ENCODE measurements at regions of chr1 and their contacts with region 1.

Region 1: DNA sequence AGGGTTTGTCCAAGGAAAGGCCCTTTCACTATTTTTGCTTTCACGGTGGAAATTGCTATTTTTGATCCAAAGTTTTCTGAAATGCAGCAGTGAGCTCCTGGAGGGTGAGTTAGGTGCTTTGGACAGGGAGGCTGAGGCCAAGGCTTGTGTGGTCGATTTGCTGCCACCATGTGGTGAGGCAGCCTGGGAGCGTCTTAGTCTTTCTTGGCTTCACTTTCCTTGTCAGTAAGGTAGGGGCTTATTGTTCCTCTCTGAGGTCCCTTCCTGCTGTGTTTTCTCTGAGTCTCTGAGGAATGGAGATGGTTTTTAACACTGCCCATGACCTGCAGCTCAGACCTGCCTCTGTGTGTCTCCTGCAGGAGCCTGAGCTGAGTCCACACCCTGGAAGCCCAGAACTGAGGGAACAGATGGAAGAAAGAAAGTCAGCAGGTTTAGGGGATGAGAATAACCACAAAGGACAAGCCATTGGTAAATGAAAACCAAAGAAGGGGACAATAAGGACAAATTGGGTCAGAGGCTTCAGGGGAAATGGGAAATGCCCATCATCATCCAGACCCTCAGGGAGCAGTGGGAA is 20.1 kb upstream of the S100A10 start:
- DNase-seq: peak in 1 of 2 experiments; percentile 72
- ATAC-seq: peak; percentile 83 to 91; a peak in 5 of 6 replicates
- H3K4me3 ChIP-seq: no peak overlapping the region
- H3K27ac ChIP-seq: 0 out of 6 replicates have a peak overlapping the region, but pooled peaks of 1 of the 2 experiments have one; percentile 32
- H3K4me1 ChIP-seq: no peaks in the 10 kb centered on the region
- CTCF ChIP-seq: peak; percentile 70
- EP300 ChIP-seq: no peak
- POLR2A ChIP-seq: no peak
- RAD21 ChIP-seq: peak; percentile 63 to 73

Region 2: DNA sequence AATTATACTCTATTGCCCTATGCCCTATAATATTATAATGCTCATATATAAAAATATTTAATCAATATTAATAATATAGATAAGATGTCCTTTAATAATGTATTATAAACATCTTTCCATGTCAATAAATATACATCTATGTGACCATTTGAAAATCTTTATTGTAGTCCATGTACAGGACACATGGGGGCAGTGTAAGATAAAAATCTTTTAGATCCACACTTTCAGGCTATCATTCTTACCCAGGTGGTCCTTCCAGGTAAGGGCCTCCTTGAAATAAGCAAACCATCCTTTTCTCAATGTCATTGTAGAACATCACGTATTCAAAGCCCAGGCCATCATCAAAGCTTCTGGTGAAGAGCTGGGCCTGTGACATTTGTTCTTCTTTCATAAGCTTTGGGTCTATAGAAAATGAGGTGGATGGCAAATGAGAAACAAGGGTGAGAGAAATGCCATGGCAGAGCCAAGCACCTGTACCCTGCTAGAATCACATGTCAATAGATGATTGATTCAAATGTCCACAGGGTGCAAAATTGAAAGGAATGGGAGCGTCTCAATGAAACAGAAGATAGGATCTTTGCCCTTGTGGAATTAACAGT is 124.7 kb before region 1 on chr1:
- CTCF ChIA-PET with region 1: interaction called, 12 read pairs
- POLR2A ChIA-PET with region 1: no interaction called
- DNase-seq: peak; percentile 33 to 41
- ATAC-seq: peak; percentile 68 to 80; a peak in 3 of 6 replicates
- H3K4me3 ChIP-seq: no peak overlapping the region
- H3K27ac ChIP-seq: no peak overlapping the region
- H3K4me1 ChIP-seq: no peaks in the 10 kb centered on the region
- CTCF ChIP-seq: peak; percentile 67
- EP300 ChIP-seq: no peak
- POLR2A ChIP-seq: no peak
- RAD21 ChIP-seq: peak; percentile 70 to 72

Region 3: GRCh38 chr1:151934048-151934493 is 79.7 kb before region 1 on chr1:
- CTCF ChIA-PET with region 1: interaction called, 74 read pairs
- POLR2A ChIA-PET with region 1: no interaction called
- DNase-seq: peak; percentile 54 to 76
- ATAC-seq: peak; percentile 94 to 97
- H3K4me3 ChIP-seq: no peak overlapping the region
- H3K27ac ChIP-seq: peak overlapping the region in 1 of 2 experiments; percentile 43; a peak in 1 of 6 replicates
- H3K4me1 ChIP-seq: peaks cover 33% of the 10 kb centered on the region
- CTCF ChIP-seq: peak; percentile 98
- EP300 ChIP-seq: no peak
- POLR2A ChIP-seq: no peak
- RAD21 ChIP-seq: peak; percentile 98 to 99

Region 4: GRCh38 chr1:151939779-151940178 is 74.0 kb before region 1 on chr1:
- CTCF ChIA-PET with region 1: interaction called, 74 read pairs
- POLR2A ChIA-PET with region 1: no interaction called
- DNase-seq: no peak
- ATAC-seq: no peak
- H3K4me3 ChIP-seq: no peak overlapping the region
- H3K27ac ChIP-seq: peak overlapping the region in 1 of 2 experiments; percentile 37; a peak in 2 of 6 replicates
- H3K4me1 ChIP-seq: peaks cover 75% of the 10 kb centered on the region
- CTCF ChIP-seq: no peak
- EP300 ChIP-seq: no peak
- POLR2A ChIP-seq: no peak
- RAD21 ChIP-seq: no peak

Region 5: DNA sequence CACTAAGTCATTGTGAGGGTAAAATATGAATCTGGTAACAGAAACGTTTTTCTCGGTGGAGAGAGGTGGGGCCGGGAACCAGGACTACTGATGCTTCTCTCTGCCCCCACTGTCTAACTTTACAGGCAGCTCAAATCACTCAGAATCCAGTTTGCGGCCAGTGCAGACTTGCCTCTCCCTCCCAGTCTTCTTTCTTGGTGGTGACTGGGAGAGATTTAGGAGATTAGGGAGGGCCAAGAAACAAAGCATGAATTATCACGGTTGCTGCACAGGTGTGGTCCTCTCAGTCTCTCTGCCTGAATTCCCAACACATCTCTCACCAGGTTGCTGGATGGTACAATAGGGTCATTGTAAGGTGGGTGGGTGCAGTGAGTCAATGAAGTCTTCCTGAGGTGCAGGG is 10.4 kb after region 1 on chr1:
- CTCF ChIA-PET with region 1: interaction called, 13 read pairs
- POLR2A ChIA-PET with region 1: no interaction called
- DNase-seq: no peak
- ATAC-seq: no peak
- H3K4me3 ChIP-seq: no peak overlapping the region
- H3K27ac ChIP-seq: no peak overlapping the region
- H3K4me1 ChIP-seq: peaks cover 4% of the 10 kb centered on the region
- CTCF ChIP-seq: no peak
- EP300 ChIP-seq: no peak
- POLR2A ChIP-seq: no peak
- RAD21 ChIP-seq: no peak

Region 6: GRCh38 chr1:152756872-152757271 is 743.1 kb after region 1 on chr1:
- CTCF ChIA-PET with region 1: no interaction called
- POLR2A ChIA-PET with region 1: no interaction called
- DNase-seq: no peak
- ATAC-seq: no peak
- H3K4me3 ChIP-seq: no peak overlapping the region
- H3K27ac ChIP-seq: no peak overlapping the region
- H3K4me1 ChIP-seq: no peaks in the 10 kb centered on the region
- CTCF ChIP-seq: no peak
- EP300 ChIP-seq: no peak
- POLR2A ChIP-seq: no peak
- RAD21 ChIP-seq: no peak

Measured in A549 (cell line).